ENCODE measurements at regions of chr18 and their contacts with region 1.

Region 1: GRCh38 chr18:35029770-35030169 is 11.4 kb upstream of the MAPRE2 start:
- DNase-seq: no peak
- H3K4me3 Mint-ChIP-seq: peak overlapping the region; percentile 67
- H3K27ac Mint-ChIP-seq: peak overlapping the region; percentile 89
- H3K4me1 Mint-ChIP-seq: peaks cover 27% of the 10 kb centered on the region
- H3K27me3 Mint-ChIP-seq: no peaks in the 10 kb centered on the region

Region 2: GRCh38 chr18:35040988-35041814 is 11.4 kb after region 1 on chr18 and contains the start of gene MAPRE2:
- CTCF ChIA-PET with region 1: interaction called, 79 read pairs
- POLR2A ChIA-PET with region 1: interaction called, 141 read pairs
- DNase-seq: peak; percentile 99
- H3K4me3 Mint-ChIP-seq: peak within 1 kb of the TSS; percentile 92
- H3K27ac Mint-ChIP-seq: peak within 1 kb of the TSS; percentile 88
- H3K4me1 Mint-ChIP-seq: peaks cover 45% of the 10 kb centered on the region
- H3K27me3 Mint-ChIP-seq: no peaks in the 10 kb centered on the region
- total RNA-seq, gene MAPRE2: 39.2 to 45.2 TPM